ENCODE measurements at regions of chr13 and their contacts with region 1.

Region 1: GRCh38 chr13:95403828-95404522 is 102.7 kb upstream of the ABCC4 start:
- DNase-seq: peak; percentile 43 to 81 (median 71)
- ATAC-seq: peak; percentile 89
- H3K4me3 ChIP-seq: peak overlapping the region; percentile 56
- H3K4me3 Mint-ChIP-seq: peak overlapping the region; percentile 80 to 97 (median 96)
- H3K27ac ChIP-seq: no peak overlapping the region
- H3K27ac Mint-ChIP-seq: peak overlapping the region in 5 of 9 donors; percentile 5 to 68 (median 17)
- H3K4me1 ChIP-seq: no peaks in the 10 kb centered on the region
- H3K4me1 Mint-ChIP-seq: peaks cover 5 to 13% (median 9%) of the 10 kb centered on the region in 7 donors
- H3K27me3 ChIP-seq: no peaks in the 10 kb centered on the region
- H3K27me3 Mint-ChIP-seq: peaks cover 0 to 11% (median 9%) of the 10 kb centered on the region in 5 donors

Region 2: GRCh38 chr13:94435604-94436226 is 968.3 kb before region 1 on chr13:
- CTCF ChIA-PET with region 1: no interaction called
- POLR2A ChIA-PET with region 1: no interaction called
- intact Hi-C with region 1: loop called in 1 of 2 experiments (anchors 1 kb)
- DNase-seq: peak in 7 of 9 donors; percentile 18 to 63 (median 50)
- ATAC-seq: peak; percentile 73
- H3K4me3 ChIP-seq: no peak overlapping the region
- H3K4me3 Mint-ChIP-seq: no peak overlapping the region
- H3K27ac ChIP-seq: no peak overlapping the region
- H3K27ac Mint-ChIP-seq: no peak overlapping the region
- H3K4me1 ChIP-seq: no peaks in the 10 kb centered on the region
- H3K4me1 Mint-ChIP-seq: peaks cover 0 to 16% (median 0%) of the 10 kb centered on the region in 7 donors
- H3K27me3 ChIP-seq: no peaks in the 10 kb centered on the region
- H3K27me3 Mint-ChIP-seq: peaks cover 0 to 3% (median 0%) of the 10 kb centered on the region in 5 donors

Region 3: GRCh38 chr13:94674609-94675348 is 729.2 kb before region 1 on chr13:
- CTCF ChIA-PET with region 1: interaction called, 12 read pairs
- POLR2A ChIA-PET with region 1: no interaction called
- intact Hi-C with region 1: loop called (anchors 1 kb)
- DNase-seq: peak in 7 of 9 donors; percentile 12 to 49 (median 34)
- ATAC-seq: peak; percentile 55
- H3K4me3 ChIP-seq: no peak overlapping the region
- H3K4me3 Mint-ChIP-seq: no peak overlapping the region
- H3K27ac ChIP-seq: no peak overlapping the region
- H3K27ac Mint-ChIP-seq: no peak overlapping the region
- H3K4me1 ChIP-seq: no peaks in the 10 kb centered on the region
- H3K4me1 Mint-ChIP-seq: no peaks in the 10 kb centered on the region
- H3K27me3 ChIP-seq: no peaks in the 10 kb centered on the region
- H3K27me3 Mint-ChIP-seq: peaks cover 12 to 31% (median 20%) of the 10 kb centered on the region in 5 donors

Region 4: GRCh38 chr13:95191821-95192563 is 212.0 kb before region 1 on chr13:
- CTCF ChIA-PET with region 1: interaction called, 103 read pairs
- POLR2A ChIA-PET with region 1: interaction called, 5 read pairs
- intact Hi-C with region 1: loop called (anchors 1 kb)
- DNase-seq: peak in 8 of 9 donors; percentile 12 to 67 (median 36)
- ATAC-seq: peak; percentile 73
- H3K4me3 ChIP-seq: no peak overlapping the region
- H3K4me3 Mint-ChIP-seq: no peak overlapping the region
- H3K27ac ChIP-seq: no peak overlapping the region
- H3K27ac Mint-ChIP-seq: peak overlapping the region in 3 of 9 donors; percentile 20 to 69 (median 32)
- H3K4me1 ChIP-seq: peaks cover 0 to 2% of the 10 kb centered on the region in 2 donors
- H3K4me1 Mint-ChIP-seq: peaks cover 2 to 21% (median 19%) of the 10 kb centered on the region in 7 donors
- H3K27me3 ChIP-seq: no peaks in the 10 kb centered on the region
- H3K27me3 Mint-ChIP-seq: no peaks in the 10 kb centered on the region

Region 5: DNA sequence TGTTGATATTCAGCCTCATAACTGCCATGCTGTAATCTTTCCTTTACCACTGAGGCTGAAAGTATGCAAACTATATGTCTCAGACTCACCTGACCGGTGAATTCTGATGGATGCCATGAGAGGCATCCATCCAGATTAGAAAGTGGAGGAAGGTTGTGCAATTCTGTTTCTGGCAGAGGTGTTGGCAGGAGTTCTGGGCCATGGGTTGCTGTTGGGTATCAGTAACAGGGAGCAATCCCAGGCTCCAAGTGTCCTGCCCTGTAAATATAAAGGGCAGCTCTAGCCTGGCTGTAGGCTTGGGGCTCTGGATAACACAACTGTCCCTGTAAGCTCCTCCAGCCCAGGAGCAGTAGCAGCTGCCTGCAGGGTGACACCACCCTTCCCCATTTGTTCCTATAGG is 25.4 kb before region 1 on chr13:
- CTCF ChIA-PET with region 1: interaction called, 8 read pairs
- POLR2A ChIA-PET with region 1: no interaction called
- intact Hi-C with region 1: loop called (anchors 1 kb)
- DNase-seq: no peak
- ATAC-seq: no peak
- H3K4me3 ChIP-seq: no peak overlapping the region
- H3K4me3 Mint-ChIP-seq: no peak overlapping the region
- H3K27ac ChIP-seq: no peak overlapping the region
- H3K27ac Mint-ChIP-seq: no peak overlapping the region
- H3K4me1 ChIP-seq: no peaks in the 10 kb centered on the region
- H3K4me1 Mint-ChIP-seq: peaks cover 0 to 6% (median 0%) of the 10 kb centered on the region in 7 donors
- H3K27me3 ChIP-seq: no peaks in the 10 kb centered on the region
- H3K27me3 Mint-ChIP-seq: peaks cover 0 to 17% (median 11%) of the 10 kb centered on the region in 5 donors

Region 6: GRCh38 chr13:95480131-95480545 is 76.2 kb after region 1 on chr13:
- CTCF ChIA-PET with region 1: interaction called, 3 read pairs
- POLR2A ChIA-PET with region 1: no interaction called
- intact Hi-C with region 1: loop called (anchors 1 kb)
- DNase-seq: peak in 1 of 9 donors; percentile 37
- ATAC-seq: peak; percentile 60
- H3K4me3 ChIP-seq: no peak overlapping the region
- H3K4me3 Mint-ChIP-seq: peak overlapping the region in 3 of 10 donors; percentile 8 to 35 (median 11)
- H3K27ac ChIP-seq: no peak overlapping the region
- H3K27ac Mint-ChIP-seq: peak overlapping the region in 1 of 9 donors; percentile 31
- H3K4me1 ChIP-seq: no peaks in the 10 kb centered on the region
- H3K4me1 Mint-ChIP-seq: peaks cover 0 to 17% (median 0%) of the 10 kb centered on the region in 7 donors
- H3K27me3 ChIP-seq: no peaks in the 10 kb centered on the region
- H3K27me3 Mint-ChIP-seq: peaks cover 0 to 8% (median 0%) of the 10 kb centered on the region in 5 donors